Heart left ventricle (tissue), 16 donors: ENCODE measurements at regions of chr6 and their contacts with region 1.

Region 1: GRCh38 chr6:118263921-118264486 is 284.1 kb upstream of the PLN start:
- DNase-seq: peak in 1 of 5 donors; percentile 16
- ATAC-seq: peak; percentile 64 to 74 (median 68)
- H3K4me3 ChIP-seq: no peak overlapping the region
- H3K27ac ChIP-seq: no peak overlapping the region
- H3K4me1 ChIP-seq: no peaks in the 10 kb centered on the region
- H3K27me3 ChIP-seq: no peaks in the 10 kb centered on the region
- CTCF ChIP-seq: peak in 11 of 12 donors; percentile 32 to 65 (median 54)
- POLR2A ChIP-seq: no peak

Region 2: DNA sequence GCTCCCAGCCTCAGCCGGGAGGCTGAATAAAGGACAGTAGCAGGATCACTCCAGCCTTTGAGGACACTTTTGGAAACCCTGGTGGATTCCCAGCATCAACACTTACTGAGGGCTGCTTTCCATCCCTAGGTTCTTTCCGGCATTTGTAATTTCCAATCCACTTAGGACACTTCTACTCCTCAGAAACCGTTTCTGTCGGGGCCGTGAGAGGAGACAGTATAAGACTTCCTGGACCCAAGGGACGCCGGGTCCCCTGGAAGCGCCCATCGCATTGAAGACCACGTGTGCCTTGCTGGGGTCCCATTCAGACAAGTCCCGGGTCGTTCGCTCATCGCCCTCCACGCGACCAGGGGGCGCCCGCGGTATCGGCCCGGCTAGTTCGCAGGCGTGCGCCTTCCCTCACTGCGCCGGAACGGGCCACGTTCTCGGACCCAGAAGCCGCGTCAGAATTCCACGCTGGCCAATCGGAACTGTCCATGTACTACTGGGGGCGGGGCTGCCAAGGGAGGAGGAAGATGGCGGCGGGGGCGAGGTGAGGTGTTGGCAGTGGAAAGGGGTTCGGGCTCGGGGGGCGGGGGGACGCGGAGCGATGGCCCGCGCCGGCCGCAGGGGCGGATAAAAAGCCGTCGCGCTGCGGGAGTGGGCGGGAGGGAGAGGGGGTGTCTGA is 588.9 kb before region 1 on chr6 and contains the start of gene NUS1:
- intact Hi-C with region 1: loop called in 1 of 10 experiments (anchors 10 kb)
- DNase-seq: peak; percentile 97 to 98 (median 98)
- ATAC-seq: peak; percentile 99 to 100 (median 100)
- H3K4me3 ChIP-seq: peak within 1 kb of the TSS; percentile 62 to 88 (median 76)
- H3K27ac ChIP-seq: peak within 1 kb of the TSS in 11 of 12 donors; percentile 70 to 84 (median 76)
- H3K4me1 ChIP-seq: peaks cover 5 to 50% (median 21%) of the 10 kb centered on the region in 12 donors
- H3K27me3 ChIP-seq: no peaks in the 10 kb centered on the region
- CTCF ChIP-seq: peak; percentile 57 to 95 (median 80)
- POLR2A ChIP-seq: peak in 1 of 2 donors; percentile 44
- total RNA-seq, gene NUS1: 8.1 to 20.1 (median 14.7) TPM

Region 3: DNA sequence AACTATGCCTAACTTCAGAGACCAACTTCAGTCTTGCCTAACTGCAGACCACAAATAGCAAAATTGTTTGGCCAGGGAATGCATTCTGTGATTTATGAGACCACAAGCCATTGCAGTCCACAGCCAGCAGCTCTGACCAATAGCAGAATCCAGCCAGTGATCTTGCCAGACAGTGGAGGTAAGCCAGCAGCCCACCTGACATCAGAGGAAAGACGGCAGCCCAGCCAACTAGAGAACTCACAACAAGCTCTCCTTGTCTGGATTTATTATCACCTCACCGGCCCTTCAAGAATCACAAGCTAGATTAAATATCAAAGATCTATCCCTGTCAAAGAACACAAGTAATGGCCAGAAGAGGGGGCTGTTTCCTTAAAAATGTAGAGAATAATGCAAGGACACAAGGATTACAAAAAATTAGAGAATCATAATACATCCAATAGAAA is 423.4 kb before region 1 on chr6:
- intact Hi-C with region 1: loop called in 2 of 10 experiments (anchors 10 kb)
- DNase-seq: no peak
- ATAC-seq: no peak
- H3K4me3 ChIP-seq: no peak overlapping the region
- H3K27ac ChIP-seq: no peak overlapping the region
- H3K4me1 ChIP-seq: no peaks in the 10 kb centered on the region
- H3K27me3 ChIP-seq: no peaks in the 10 kb centered on the region
- CTCF ChIP-seq: peak in 4 of 12 donors; percentile 5 to 23 (median 17)
- POLR2A ChIP-seq: no peak